ENCODE measurements at regions of chr12 and their contacts with region 1.

Region 1: GRCh38 chr12:20055856-20056255 is 312.5 kb upstream of the PDE3A start:
- DNase-seq: no peak
- ATAC-seq: no peak
- H3K4me3 ChIP-seq: no peak overlapping the region
- H3K27ac ChIP-seq: no peak overlapping the region
- H3K4me1 ChIP-seq: peaks cover 0 to 2% of the 10 kb centered on the region in 2 donors
- H3K27me3 ChIP-seq: no peaks in the 10 kb centered on the region

Region 2: DNA sequence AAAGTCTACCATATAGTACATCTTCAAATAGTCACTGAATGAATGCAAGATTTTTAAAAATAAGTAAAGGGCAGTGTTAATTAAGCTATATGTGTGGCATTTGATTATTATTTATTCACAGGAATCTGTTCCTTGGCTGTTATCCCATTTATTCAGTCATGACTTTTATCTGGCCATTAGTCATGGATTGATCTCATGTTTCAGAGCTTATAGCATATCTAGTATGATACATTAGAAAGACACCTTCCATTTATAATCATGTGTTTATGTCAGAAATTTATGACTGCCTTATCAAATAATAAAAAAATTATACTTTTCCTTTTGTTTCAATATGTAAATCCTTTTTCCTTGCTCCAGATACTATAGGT is 64.5 kb after region 1 on chr12:
- intact Hi-C with region 1: loop called in 1 of 2 experiments (anchors 2 kb)
- DNase-seq: no peak
- ATAC-seq: no peak
- H3K4me3 ChIP-seq: no peak overlapping the region
- H3K27ac ChIP-seq: no peak overlapping the region
- H3K4me1 ChIP-seq: peaks cover 0 to 2% of the 10 kb centered on the region in 2 donors
- H3K27me3 ChIP-seq: no peaks in the 10 kb centered on the region

Measured in aorta (tissue), 5 donors.